Dorsolateral prefrontal cortex (tissue), 120 donors: ENCODE measurements at regions of chr11 and their contacts with region 1.

Region 1: DNA sequence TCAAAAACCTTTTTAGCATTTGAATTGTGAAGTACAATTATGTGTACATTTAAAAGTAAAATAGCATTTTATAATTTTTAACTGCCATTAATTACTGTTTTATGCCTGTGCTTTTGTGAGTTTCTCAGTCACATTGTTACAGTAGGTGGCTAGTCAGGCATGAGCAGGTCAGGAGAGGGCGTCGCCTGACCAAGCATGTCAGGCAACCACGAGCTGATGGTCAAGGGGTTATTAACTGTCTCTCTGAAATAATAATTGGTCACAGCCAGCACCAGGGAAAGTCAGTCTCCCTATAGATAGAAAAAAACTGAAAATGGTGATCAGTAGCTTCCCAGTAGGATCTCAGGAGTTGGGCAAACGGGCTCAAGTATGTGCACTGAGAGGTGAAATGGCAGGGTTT is 19.4 kb upstream of the CCDC81 start:
- DNase-seq: no peak
- H3K4me3 ChIP-seq: no peak overlapping the region
- H3K27ac ChIP-seq: no peak overlapping the region
- H3K27me3 ChIP-seq: no peaks in the 10 kb centered on the region
- CTCF ChIP-seq: no peak

Region 2: DNA sequence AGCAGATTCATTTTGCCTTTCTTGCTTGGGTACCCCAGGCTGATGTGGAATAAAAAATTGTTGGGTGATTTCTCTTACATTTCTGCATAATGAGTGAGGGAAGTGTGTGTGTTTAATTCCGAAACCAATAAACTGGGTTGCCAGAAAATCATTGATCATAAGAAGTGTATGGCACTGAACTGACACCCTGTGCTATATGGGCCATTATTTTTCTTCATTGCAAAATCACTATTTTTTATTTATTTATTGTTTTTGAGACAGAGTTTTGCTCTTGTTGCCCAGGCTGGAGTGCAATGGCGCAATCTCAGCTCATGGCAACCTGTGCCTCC is 67.8 kb before region 1 on chr11:
- intact Hi-C with region 1: no loop called
- DNase-seq: no peak
- H3K4me3 ChIP-seq: no peak overlapping the region
- H3K27ac ChIP-seq: no peak overlapping the region
- H3K27me3 ChIP-seq: no peaks in the 10 kb centered on the region
- CTCF ChIP-seq: no peak

Region 3: GRCh38 chr11:86418917-86419316 is 63.7 kb after region 1 on chr11:
- intact Hi-C with region 1: loop called in 1 of 2 experiments (anchors 10 kb)
- DNase-seq: no peak
- H3K4me3 ChIP-seq: no peak overlapping the region
- H3K27ac ChIP-seq: no peak overlapping the region
- H3K27me3 ChIP-seq: no peaks in the 10 kb centered on the region
- CTCF ChIP-seq: peak in 13 of 56 donors; percentile 11 to 42 (median 24)